ENCODE measurements at regions of chr11 and their contacts with region 1.

Region 1: GRCh38 chr11:27698872-27699474 is 1.3 kb downstream of the BDNF start:
- DNase-seq: peak; percentile 82
- ATAC-seq: peak; percentile 70
- H3K4me3 ChIP-seq: peak overlapping the region; percentile 69 to 86
- H3K27ac ChIP-seq: peak overlapping the region; percentile 86
- H3K4me1 ChIP-seq: peaks cover 44 to 58% of the 10 kb centered on the region in 2 experiments
- H3K27me3 ChIP-seq: no peaks in the 10 kb centered on the region
- CTCF ChIP-seq: peak; percentile 54 to 80 (median 78); a peak in 5 of 6 replicates
- POLR2A ChIP-seq: no peak
- RAD21 ChIP-seq: peak; percentile 79

Region 2: DNA sequence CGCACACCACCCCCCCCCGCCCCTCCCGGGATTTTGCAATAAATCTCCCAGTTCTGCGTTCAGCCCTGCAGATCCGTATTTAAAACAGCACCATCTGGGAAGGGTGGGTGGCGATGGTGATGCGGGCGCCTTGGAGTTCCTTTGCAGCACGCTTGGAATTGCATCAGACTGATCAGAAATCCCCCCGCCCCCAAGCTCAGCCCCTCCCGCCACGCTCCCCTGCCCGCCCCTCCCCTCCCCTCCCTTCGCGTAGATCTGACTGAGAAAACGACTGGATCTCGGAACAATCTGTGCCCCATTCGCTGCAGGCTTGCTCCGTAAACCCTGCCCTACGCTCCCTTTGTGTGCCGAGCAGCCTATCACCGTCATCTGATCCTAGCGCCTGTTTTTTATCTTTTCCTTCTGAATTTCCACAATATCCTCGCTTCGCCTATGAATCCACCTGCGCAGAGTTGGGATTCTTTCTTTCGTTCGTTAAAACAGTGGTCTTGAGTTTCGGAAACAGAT is 19.4 kb after region 1 on chr11:
- CTCF ChIA-PET with region 1: interaction called, 39 read pairs
- POLR2A ChIA-PET with region 1: interaction called, 5 read pairs
- RAD21 ChIA-PET with region 1: interaction called in 1 of 2 experiments, 12 read pairs
- intact Hi-C with region 1: no loop called
- DNase-seq: peak; percentile 73
- ATAC-seq: peak; percentile 84
- H3K4me3 ChIP-seq: peak overlapping the region; percentile 57 to 62
- H3K27ac ChIP-seq: peak overlapping the region; percentile 85
- H3K4me1 ChIP-seq: peaks cover 18 to 28% of the 10 kb centered on the region in 2 experiments; a peak in 3 of 4 replicates
- H3K27me3 ChIP-seq: no peaks in the 10 kb centered on the region
- CTCF ChIP-seq: no peak
- POLR2A ChIP-seq: peak; percentile 87
- RAD21 ChIP-seq: no peak

Region 3: DNA sequence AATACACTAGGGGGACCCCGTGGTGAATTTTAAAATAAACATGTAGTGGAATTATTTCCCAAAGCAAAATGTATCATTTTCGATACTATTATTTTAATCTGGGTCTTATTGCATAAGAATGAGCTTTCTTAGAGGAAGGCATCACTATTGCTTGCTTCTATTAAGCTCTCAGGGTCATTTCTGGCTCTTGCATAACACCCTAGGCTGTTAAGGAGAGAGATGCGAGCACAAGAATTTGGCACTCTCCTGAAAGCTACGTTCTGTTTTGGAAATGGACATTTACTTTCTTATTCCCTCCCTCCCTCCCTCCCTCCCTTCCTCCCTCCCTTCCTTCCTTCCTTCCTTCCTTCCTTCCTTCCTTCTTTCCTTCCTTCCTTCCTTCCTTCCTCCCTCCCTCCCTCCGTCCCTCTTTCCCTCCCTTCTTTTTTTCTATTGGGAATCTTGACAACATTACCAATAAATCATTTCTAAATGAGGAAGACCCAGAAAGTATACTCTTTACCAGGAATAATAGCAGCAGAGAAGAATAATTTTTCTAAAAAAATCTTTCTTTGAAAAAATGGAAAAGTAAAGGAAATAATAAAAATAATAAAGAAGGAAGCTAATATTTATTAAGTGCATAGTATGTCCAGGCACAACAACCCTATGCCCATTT is 84.9 kb after region 1 on chr11:
- CTCF ChIA-PET with region 1: no interaction called
- POLR2A ChIA-PET with region 1: no interaction called
- RAD21 ChIA-PET with region 1: no interaction called
- intact Hi-C with region 1: no loop called
- DNase-seq: no peak
- ATAC-seq: no peak
- H3K4me3 ChIP-seq: no peak overlapping the region
- H3K27ac ChIP-seq: no peak overlapping the region
- H3K4me1 ChIP-seq: no peaks in the 10 kb centered on the region
- H3K27me3 ChIP-seq: no peaks in the 10 kb centered on the region
- CTCF ChIP-seq: no peak
- POLR2A ChIP-seq: no peak
- RAD21 ChIP-seq: no peak

Region 4: GRCh38 chr11:27830206-27830605 is 131.2 kb after region 1 on chr11:
- CTCF ChIA-PET with region 1: no interaction called
- POLR2A ChIA-PET with region 1: no interaction called
- RAD21 ChIA-PET with region 1: no interaction called
- intact Hi-C with region 1: no loop called
- DNase-seq: no peak
- ATAC-seq: no peak
- H3K4me3 ChIP-seq: no peak overlapping the region
- H3K27ac ChIP-seq: no peak overlapping the region
- H3K4me1 ChIP-seq: no peaks in the 10 kb centered on the region
- H3K27me3 ChIP-seq: no peaks in the 10 kb centered on the region
- CTCF ChIP-seq: no peak
- POLR2A ChIP-seq: no peak
- RAD21 ChIP-seq: no peak

Region 5: DNA sequence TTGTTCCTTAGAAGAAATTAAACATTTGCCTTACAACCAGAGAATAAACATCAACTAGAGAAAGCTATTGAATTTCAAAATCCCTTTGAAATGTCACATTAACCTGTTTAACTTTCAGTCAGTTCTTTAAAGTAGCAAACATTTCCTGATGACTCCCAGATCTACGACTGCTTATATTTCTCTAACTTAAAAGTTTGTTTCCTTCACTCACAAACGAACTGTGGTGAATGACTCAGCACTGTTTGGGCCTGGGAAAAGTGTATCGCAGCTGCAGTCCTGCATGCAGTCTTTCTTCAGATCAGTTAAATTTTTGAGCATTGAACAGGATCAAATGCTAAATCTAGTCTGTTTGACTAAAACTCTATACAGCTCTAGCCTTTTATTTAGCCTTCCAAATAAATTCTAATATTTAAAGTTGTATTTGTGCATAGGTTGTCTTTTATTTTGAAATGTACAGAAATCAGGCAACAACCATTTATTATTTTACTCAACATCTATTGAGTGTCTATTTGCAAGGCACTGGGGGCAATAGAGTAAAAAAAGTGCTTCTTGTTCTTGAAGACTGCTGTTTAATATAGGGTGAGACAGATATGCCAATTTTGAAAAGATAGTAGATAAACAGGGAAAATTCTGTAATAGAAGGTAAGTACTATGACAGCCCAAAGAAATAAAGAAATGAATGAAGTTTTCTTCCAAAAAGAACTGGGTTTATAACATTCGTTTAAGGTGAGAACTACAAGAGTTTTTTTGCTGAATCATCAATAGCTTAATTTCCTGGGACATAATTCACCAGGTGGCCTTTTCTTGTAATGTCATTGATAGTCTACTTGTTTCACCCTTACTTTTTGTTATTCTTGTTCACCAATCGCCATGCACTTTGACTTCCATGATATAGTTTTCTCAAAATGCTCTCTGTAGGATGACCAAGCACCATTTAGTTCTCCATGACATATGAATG is 644.6 kb after region 1 on chr11:
- CTCF ChIA-PET with region 1: no interaction called
- POLR2A ChIA-PET with region 1: no interaction called
- RAD21 ChIA-PET with region 1: no interaction called
- intact Hi-C with region 1: loop called (anchors 2 kb)
- DNase-seq: peak; percentile 45
- ATAC-seq: peak; percentile 78
- H3K4me3 ChIP-seq: peak overlapping the region in 1 of 2 experiments; percentile 7; a peak in 1 of 4 replicates
- H3K27ac ChIP-seq: peak overlapping the region; percentile 45; the same call in 1 of the 2 replicates
- H3K4me1 ChIP-seq: peaks cover 28 to 39% of the 10 kb centered on the region in 2 experiments
- H3K27me3 ChIP-seq: no peaks in the 10 kb centered on the region
- CTCF ChIP-seq: no peak
- POLR2A ChIP-seq: no peak
- RAD21 ChIP-seq: no peak

Region 6: DNA sequence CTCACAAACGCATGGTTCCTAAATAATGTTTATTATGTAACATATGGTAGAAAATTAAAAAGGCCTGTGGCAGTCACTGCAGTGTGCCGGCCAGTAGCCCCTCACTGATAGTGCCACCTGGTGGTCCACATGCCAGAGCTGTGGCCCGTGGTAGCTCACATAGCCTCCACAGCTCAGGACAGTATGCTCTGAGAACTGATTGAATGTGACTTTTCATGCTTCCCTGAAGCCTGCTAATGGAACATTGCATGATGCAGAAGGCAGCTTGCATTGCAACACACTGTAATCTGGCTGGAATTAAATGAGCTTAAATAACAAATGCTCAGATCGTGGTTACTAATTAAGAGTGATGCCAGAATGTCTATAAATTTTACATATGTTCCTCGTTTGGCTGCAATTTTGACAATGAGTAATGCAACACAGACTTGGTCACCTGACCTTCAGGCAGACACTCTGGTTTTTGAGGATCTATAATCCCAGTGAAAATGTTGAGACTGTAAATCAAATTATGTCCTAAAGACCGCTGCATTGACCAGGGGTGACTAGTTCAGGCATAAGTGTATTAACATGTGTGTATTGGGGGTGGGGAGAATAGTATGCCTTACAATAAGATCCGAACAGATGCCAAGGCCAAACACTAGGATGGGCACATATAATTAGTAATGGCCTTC is 975.6 kb after region 1 on chr11:
- CTCF ChIA-PET with region 1: interaction called, 30 read pairs
- POLR2A ChIA-PET with region 1: interaction called, 3 read pairs
- RAD21 ChIA-PET with region 1: interaction called, 7 to 9 read pairs
- intact Hi-C with region 1: loop called (anchors 1 kb)
- DNase-seq: peak; percentile 48
- ATAC-seq: peak; percentile 94
- H3K4me3 ChIP-seq: no peak overlapping the region
- H3K27ac ChIP-seq: peak overlapping the region; percentile 56; the same call in 1 of the 2 replicates
- H3K4me1 ChIP-seq: peaks cover 14 to 20% of the 10 kb centered on the region in 2 experiments
- H3K27me3 ChIP-seq: no peaks in the 10 kb centered on the region
- CTCF ChIP-seq: peak; percentile 39 to 79 (median 76); a peak in 5 of 6 replicates
- POLR2A ChIP-seq: no peak
- RAD21 ChIP-seq: peak; percentile 76

Region 7: GRCh38 chr11:28860893-28861292 is 1161.9 kb after region 1 on chr11:
- CTCF ChIA-PET with region 1: interaction called, 3 read pairs
- POLR2A ChIA-PET with region 1: no interaction called
- RAD21 ChIA-PET with region 1: no interaction called
- intact Hi-C with region 1: loop called (anchors 10 kb)
- DNase-seq: peak; percentile 13
- ATAC-seq: no peak; the same call in 1 of the 2 replicates
- H3K4me3 ChIP-seq: no peak overlapping the region
- H3K27ac ChIP-seq: no peak overlapping the region
- H3K4me1 ChIP-seq: peaks cover 0 to 10% of the 10 kb centered on the region in 2 experiments; a peak in 2 of 4 replicates
- H3K27me3 ChIP-seq: no peaks in the 10 kb centered on the region
- CTCF ChIP-seq: no peak
- POLR2A ChIP-seq: no peak
- RAD21 ChIP-seq: no peak

Region 8: GRCh38 chr11:29159552-29160465 is 1460.8 kb after region 1 on chr11:
- CTCF ChIA-PET with region 1: interaction called, 51 read pairs
- POLR2A ChIA-PET with region 1: interaction called, 3 read pairs
- RAD21 ChIA-PET with region 1: interaction called, 7 to 24 read pairs
- intact Hi-C with region 1: loop called (anchors 1 kb)
- DNase-seq: peak; percentile 31
- ATAC-seq: peak; percentile 99
- H3K4me3 ChIP-seq: no peak overlapping the region
- H3K27ac ChIP-seq: no peak overlapping the region
- H3K4me1 ChIP-seq: no peaks in the 10 kb centered on the region
- H3K27me3 ChIP-seq: no peaks in the 10 kb centered on the region
- CTCF ChIP-seq: peak; percentile 53 to 78 (median 65); a peak in 5 of 6 replicates
- POLR2A ChIP-seq: peak; percentile 36
- RAD21 ChIP-seq: peak; percentile 81

Region 9: GRCh38 chr11:29333993-29334775 is 1635.2 kb after region 1 on chr11:
- CTCF ChIA-PET with region 1: interaction called, 53 read pairs
- POLR2A ChIA-PET with region 1: no interaction called
- RAD21 ChIA-PET with region 1: interaction called, 10 to 11 read pairs
- intact Hi-C with region 1: loop called (anchors 1 kb)
- DNase-seq: peak; percentile 29
- ATAC-seq: peak; percentile 88
- H3K4me3 ChIP-seq: no peak overlapping the region
- H3K27ac ChIP-seq: no peak overlapping the region
- H3K4me1 ChIP-seq: peaks cover 0 to 2% of the 10 kb centered on the region in 2 experiments; a peak in 1 of 4 replicates
- H3K27me3 ChIP-seq: no peaks in the 10 kb centered on the region
- CTCF ChIP-seq: peak; percentile 40 to 60 (median 55); a peak in 4 of 6 replicates
- POLR2A ChIP-seq: no peak
- RAD21 ChIP-seq: peak; percentile 82

Measured in HCT116 (cell line).